ENCODE measurements at regions of chr3 and their contacts with region 1.

Region 1: DNA sequence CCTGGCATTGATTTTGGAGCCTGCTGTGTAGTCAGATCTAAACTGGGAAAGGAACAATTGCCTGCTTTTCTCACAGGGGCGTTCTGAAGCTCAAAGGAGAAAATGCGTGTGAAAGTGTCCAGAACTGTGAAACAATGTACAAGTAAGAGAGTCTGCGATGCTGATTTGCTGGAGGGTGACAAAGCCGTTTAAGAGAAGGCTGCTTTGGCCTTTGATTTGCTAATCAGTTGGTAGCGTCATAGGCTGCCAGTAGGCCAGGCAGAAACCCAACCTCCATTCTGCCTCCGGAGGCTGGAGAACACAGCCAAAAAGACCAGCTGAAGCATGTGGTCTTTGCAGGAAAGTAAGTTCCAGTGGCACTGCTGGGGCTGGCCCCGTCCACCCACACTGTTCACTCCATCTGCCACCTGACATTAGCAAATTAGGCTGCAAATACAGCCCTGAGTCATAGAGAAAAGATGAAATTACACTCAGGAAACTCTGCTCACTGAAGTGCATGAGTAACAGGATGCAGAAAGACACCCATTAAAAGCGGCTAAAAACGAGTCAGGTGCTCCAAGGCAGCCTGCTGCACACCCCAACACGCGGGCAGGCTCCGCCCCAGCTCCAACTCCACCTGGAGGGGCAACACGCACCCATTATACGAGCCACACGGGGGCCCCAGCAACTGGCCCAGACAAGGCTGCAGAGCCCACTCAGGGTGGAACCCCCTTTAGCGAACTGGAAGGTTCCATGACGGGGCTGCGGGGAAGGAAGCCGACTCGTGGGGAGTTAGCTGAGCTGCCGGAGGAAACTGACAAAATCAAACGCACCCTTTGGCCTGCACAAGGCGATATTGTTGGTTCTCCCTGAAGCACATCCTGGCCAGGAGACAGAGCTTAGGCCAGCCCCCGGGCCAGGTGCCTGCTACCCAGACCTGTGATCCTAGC is 31.6 kb downstream of the ZDHHC19 start:
- DNase-seq: peak; percentile 94
- H3K4me3 Mint-ChIP-seq: peak overlapping the region; percentile 66
- H3K27ac Mint-ChIP-seq: peak overlapping the region; percentile 97
- H3K4me1 Mint-ChIP-seq: peaks cover 59% of the 10 kb centered on the region
- H3K27me3 Mint-ChIP-seq: no peaks in the 10 kb centered on the region

Region 2: DNA sequence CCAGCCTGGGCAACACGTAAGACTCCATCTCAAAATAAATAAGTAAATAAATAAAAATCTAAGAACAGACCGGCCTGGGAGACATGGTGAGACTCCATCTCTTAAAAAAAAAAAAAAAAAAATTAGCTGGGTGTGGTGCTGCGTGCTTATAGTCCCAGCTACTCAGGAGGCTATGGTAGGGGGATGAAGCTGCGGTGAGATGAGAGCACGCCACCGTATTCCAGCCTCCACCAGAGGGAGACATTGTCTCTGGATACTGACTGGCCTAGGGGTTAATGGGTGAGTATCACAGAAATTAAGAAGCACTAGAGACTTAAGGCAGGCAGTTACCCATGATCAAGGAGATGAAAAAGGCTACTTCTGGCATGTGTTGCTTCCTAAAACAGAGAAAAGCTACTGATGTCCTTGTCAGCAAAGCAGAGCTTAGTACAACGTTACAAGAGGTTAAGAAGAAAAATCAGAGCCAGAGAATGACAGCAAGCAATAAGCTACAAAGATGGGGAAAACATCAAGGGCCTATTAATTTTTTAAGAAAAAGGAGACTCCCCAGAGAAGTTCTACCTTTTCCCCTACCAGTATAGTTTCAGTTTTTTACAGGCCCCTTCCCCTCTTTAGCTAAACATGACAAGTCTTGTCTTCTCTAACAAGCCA is 106.3 kb before region 1 on chr3:
- CTCF ChIA-PET with region 1: interaction called, 33 read pairs
- POLR2A ChIA-PET with region 1: interaction called, 7 read pairs
- intact Hi-C with region 1: no loop called
- DNase-seq: peak; percentile 79
- H3K4me3 Mint-ChIP-seq: no peak overlapping the region
- H3K27ac Mint-ChIP-seq: peak overlapping the region; percentile 53
- H3K4me1 Mint-ChIP-seq: peaks cover 32% of the 10 kb centered on the region
- H3K27me3 Mint-ChIP-seq: no peaks in the 10 kb centered on the region

Region 3: DNA sequence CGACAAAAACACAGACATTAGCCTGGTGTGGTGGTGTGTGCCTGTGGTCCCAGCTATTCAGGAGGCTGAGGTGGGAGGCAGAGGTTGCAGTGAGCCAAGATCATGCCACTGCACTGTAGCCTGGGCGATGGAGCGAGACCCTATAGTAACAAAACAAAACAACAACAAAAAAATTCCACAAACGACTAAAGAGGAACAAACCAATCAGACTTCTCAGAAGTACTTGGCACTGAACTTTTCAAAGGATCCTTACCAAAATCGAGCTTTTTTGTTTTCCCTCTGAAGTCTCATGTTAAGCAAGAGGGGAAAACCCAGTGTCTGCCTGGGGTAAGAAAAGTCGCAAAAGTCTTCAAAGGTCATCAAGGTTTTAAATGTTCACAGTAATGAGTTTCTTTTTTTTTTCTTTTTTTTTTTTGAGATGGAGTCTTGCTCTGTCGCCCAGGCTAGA is 67.7 kb before region 1 on chr3:
- CTCF ChIA-PET with region 1: interaction called, 8 read pairs
- POLR2A ChIA-PET with region 1: interaction called, 6 read pairs
- intact Hi-C with region 1: loop called (anchors 1 kb)
- DNase-seq: peak; percentile 58
- H3K4me3 Mint-ChIP-seq: peak overlapping the region; percentile 33
- H3K27ac Mint-ChIP-seq: peak overlapping the region; percentile 84
- H3K4me1 Mint-ChIP-seq: peaks cover 19% of the 10 kb centered on the region
- H3K27me3 Mint-ChIP-seq: no peaks in the 10 kb centered on the region

Region 4: DNA sequence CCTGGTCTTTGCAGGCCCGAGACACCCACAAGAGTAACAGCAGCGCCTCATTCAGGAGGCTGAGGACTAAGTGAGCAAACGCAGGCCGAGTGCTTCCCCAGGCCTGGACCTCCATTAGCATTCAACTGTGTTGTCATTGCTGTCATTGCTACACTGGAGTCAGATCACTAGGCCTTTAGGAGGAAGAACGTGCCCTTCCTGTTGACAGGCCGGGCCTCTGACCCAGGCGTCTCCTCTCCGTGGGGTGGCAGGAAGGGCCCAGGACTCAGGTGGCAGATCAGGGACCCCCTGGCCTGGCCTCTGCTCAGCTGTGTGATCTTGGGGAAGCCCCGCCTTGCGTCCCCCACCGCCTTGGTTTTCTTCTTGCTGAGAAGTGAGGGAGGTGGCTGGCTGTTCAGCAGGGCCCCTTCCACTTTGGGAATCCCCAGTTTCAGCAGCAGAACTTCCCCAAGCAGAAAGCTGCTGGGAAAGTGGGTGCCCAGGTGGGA is 12.4 kb after region 1 on chr3:
- CTCF ChIA-PET with region 1: interaction called, 19 read pairs
- POLR2A ChIA-PET with region 1: interaction called, 8 read pairs
- intact Hi-C with region 1: loop called (anchors 1 kb)
- DNase-seq: peak; percentile 78
- H3K4me3 Mint-ChIP-seq: peak overlapping the region; percentile 50
- H3K27ac Mint-ChIP-seq: peak overlapping the region; percentile 86
- H3K4me1 Mint-ChIP-seq: peaks cover 48% of the 10 kb centered on the region
- H3K27me3 Mint-ChIP-seq: no peaks in the 10 kb centered on the region

Measured in activated CD4-positive, alpha-beta memory T cell treated with anti-CD3 and anti-CD28 coated beads for 36 hours (primary cell).